Breast epithelium (tissue), 4 donors: ENCODE measurements at regions of chr3 and their contacts with region 1.

Region 1: DNA sequence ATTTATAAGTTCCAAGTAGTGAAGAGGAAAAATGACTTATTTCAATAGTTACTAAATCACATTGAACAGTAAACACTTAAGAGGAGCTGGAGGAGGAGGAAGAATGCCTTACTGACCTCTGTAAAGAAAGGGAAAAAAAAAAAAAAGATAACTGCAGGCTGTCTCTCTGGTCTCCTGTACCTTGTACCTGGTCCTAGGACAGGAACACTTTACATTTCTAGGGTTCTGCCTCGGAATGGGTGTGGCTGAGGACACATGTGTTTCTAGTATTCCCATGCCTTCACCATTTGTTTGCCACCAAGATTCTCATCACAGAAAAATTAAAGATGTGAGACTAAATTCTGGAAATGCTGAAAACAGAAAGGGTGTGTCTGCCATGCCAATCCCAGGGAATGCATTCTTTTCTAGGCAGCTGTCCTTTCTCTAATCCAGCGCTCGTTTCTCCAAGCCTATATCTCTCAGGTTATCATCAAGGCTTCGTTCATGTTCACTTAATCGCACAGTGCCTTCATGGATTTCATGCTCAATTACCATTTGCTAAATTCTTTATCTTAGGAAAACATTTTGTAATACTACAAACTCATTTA is 1208.3 kb downstream of the OTOL1 start:
- DNase-seq: no peak
- H3K4me3 ChIP-seq: no peak overlapping the region
- H3K27ac ChIP-seq: no peak overlapping the region
- H3K4me1 ChIP-seq: no peaks in the 10 kb centered on the region
- H3K27me3 ChIP-seq: no peaks in the 10 kb centered on the region
- CTCF ChIP-seq: no peak
- POLR2A ChIP-seq: no peak

Region 2: DNA sequence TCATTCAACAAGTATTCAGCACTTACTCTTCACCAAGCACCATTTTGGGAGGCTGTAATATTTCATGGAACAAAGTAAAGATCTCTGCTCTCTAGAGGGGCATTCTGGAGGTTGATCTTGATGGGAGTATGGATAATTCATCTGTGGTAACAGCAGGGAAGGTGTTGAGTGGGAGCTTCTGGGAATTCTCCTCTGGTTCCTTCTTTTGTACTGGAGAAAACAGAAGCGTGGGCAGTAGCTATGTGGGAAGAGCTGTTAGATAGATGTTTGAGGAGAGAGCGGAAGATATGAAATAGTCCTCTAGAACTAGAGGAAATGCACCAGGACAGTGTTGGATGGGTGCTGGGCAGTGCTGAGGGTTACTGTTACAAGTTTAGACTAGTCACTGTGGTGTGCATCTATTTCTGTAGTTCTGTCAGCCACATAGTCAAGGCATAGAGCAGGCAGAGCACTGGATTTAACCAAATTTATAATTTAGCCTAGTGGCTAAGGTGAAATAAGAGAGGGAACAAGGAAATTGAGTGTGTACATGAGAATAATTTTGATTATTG is 1474.2 kb before region 1 on chr3:
- intact Hi-C with region 1: no loop called
- DNase-seq: no peak
- H3K4me3 ChIP-seq: no peak overlapping the region
- H3K27ac ChIP-seq: no peak overlapping the region
- H3K4me1 ChIP-seq: no peaks in the 10 kb centered on the region
- H3K27me3 ChIP-seq: no peaks in the 10 kb centered on the region
- CTCF ChIP-seq: no peak
- POLR2A ChIP-seq: no peak

Region 3: DNA sequence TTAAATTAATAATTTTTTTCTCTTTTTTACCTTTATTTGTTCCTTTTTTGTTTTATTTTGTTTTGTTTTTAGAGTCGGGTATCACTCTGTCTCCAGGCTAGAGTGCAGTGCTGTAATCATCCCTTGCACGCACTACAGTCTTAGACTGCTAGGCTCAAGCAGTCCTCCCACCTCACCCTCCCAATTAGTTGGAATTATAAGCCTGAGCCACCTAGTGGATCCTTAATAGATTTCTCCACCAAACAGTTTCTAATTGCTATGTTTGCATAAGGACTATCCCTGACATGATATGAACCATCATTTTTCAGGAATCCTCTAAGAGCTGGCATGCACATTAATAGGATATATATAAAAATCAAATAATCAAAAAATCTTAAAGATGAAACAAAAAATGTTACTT is 215.0 kb before region 1 on chr3:
- intact Hi-C with region 1: loop called (anchors 5 kb)
- DNase-seq: no peak
- H3K4me3 ChIP-seq: no peak overlapping the region
- H3K27ac ChIP-seq: no peak overlapping the region
- H3K4me1 ChIP-seq: no peaks in the 10 kb centered on the region
- H3K27me3 ChIP-seq: no peaks in the 10 kb centered on the region
- CTCF ChIP-seq: no peak
- POLR2A ChIP-seq: no peak

Region 4: GRCh38 chr3:162738784-162739183 is 33.9 kb after region 1 on chr3:
- intact Hi-C with region 1: no loop called
- DNase-seq: no peak
- H3K4me3 ChIP-seq: no peak overlapping the region
- H3K27ac ChIP-seq: no peak overlapping the region
- H3K4me1 ChIP-seq: no peaks in the 10 kb centered on the region
- H3K27me3 ChIP-seq: no peaks in the 10 kb centered on the region
- CTCF ChIP-seq: no peak
- POLR2A ChIP-seq: no peak